ENCODE measurements at regions of chr12 and their contacts with region 1.

Region 1: GRCh38 chr12:54201001-54201794 is 12.4 kb upstream of the SMUG1 start:
- DNase-seq: peak; percentile 88
- H3K4me3 ChIP-seq: peak overlapping the region in 1 of 2 experiments; percentile 16; a peak in 1 of 4 replicates
- H3K27ac ChIP-seq: no peak overlapping the region
- H3K4me1 ChIP-seq: peaks cover 5 to 13% of the 10 kb centered on the region in 2 experiments; a peak in 2 of 4 replicates
- H3K27me3 ChIP-seq: peaks cover 16% of the 10 kb centered on the region; the same call in 1 of the 2 replicates
- CTCF ChIP-seq: peak; percentile 92
- EP300 ChIP-seq: no peak
- RAD21 ChIP-seq: peak; percentile 85

Region 2: GRCh38 chr12:54126696-54127537 is 74.3 kb before region 1 on chr12:
- CTCF ChIA-PET with region 1: interaction called, 127 read pairs
- POLR2A ChIA-PET with region 1: no interaction called
- DNase-seq: peak; percentile 85
- H3K4me3 ChIP-seq: peak overlapping the region; percentile 84 to 87
- H3K27ac ChIP-seq: peak overlapping the region; percentile 39 to 80; a peak in 3 of 4 replicates
- H3K4me1 ChIP-seq: peaks cover 7 to 14% of the 10 kb centered on the region in 2 experiments; a peak in 3 of 4 replicates
- H3K27me3 ChIP-seq: no peaks in the 10 kb centered on the region
- CTCF ChIP-seq: peak; percentile 9; the same call in 1 of the 2 replicates
- EP300 ChIP-seq: no peak
- RAD21 ChIP-seq: 0 out of 2 replicates have a peak, but pooled peaks have one; percentile 4

Region 3: GRCh38 chr12:54173066-54173726 is 28.0 kb before region 1 on chr12:
- CTCF ChIA-PET with region 1: interaction called, 17 read pairs
- POLR2A ChIA-PET with region 1: no interaction called
- DNase-seq: peak; percentile 85
- H3K4me3 ChIP-seq: peak overlapping the region; percentile 40 to 53
- H3K27ac ChIP-seq: peak overlapping the region in 1 of 2 experiments; percentile 30; a peak in 1 of 4 replicates
- H3K4me1 ChIP-seq: peaks cover 3 to 23% of the 10 kb centered on the region in 2 experiments; a peak in 1 of 4 replicates
- H3K27me3 ChIP-seq: no peaks in the 10 kb centered on the region
- CTCF ChIP-seq: no peak
- EP300 ChIP-seq: no peak
- RAD21 ChIP-seq: no peak

Region 4: GRCh38 chr12:54486173-54486867 is 285.1 kb after region 1 on chr12:
- CTCF ChIA-PET with region 1: no interaction called
- POLR2A ChIA-PET with region 1: no interaction called
- DNase-seq: no peak
- H3K4me3 ChIP-seq: no peak overlapping the region
- H3K27ac ChIP-seq: no peak overlapping the region
- H3K4me1 ChIP-seq: no peaks in the 10 kb centered on the region
- H3K27me3 ChIP-seq: peaks cover 7% of the 10 kb centered on the region; the same call in 1 of the 2 replicates
- CTCF ChIP-seq: no peak
- EP300 ChIP-seq: no peak
- RAD21 ChIP-seq: no peak